Caco-2 (cell line): ENCODE measurements at regions of chr2 and their contacts with region 1.

Region 1: GRCh38 chr2:19901442-19902215 is at the start of gene TTC32:
- DNase-seq: peak; percentile 95 to 96
- H3K4me3 ChIP-seq: peak within 1 kb of the TSS; percentile 61
- H3K4me3 Mint-ChIP-seq: peak within 1 kb of the TSS; percentile 81
- H3K27ac Mint-ChIP-seq: peak within 1 kb of the TSS; percentile 96
- H3K4me1 ChIP-seq: no peaks in the 10 kb centered on the region
- H3K4me1 Mint-ChIP-seq: peaks cover 12% of the 10 kb centered on the region
- H3K27me3 ChIP-seq: no peaks in the 10 kb centered on the region
- H3K27me3 Mint-ChIP-seq: no peaks in the 10 kb centered on the region
- CTCF ChIP-seq: peak in 1 of 2 experiments; percentile 26
- total RNA-seq, gene TTC32: 15.5 and 16.8 TPM in 2 replicates

Region 2: GRCh38 chr2:19933351-19933981 is 31.8 kb after region 1 on chr2:
- CTCF ChIA-PET with region 1: no interaction called
- POLR2A ChIA-PET with region 1: interaction called, 4 read pairs
- intact Hi-C with region 1: loop called (anchors 2 kb)
- DNase-seq: peak in 1 of 2 experiments; percentile 45
- H3K4me3 ChIP-seq: no peak overlapping the region
- H3K4me3 Mint-ChIP-seq: peak overlapping the region; percentile 43
- H3K27ac Mint-ChIP-seq: peak overlapping the region; percentile 48
- H3K4me1 ChIP-seq: peaks cover 6% of the 10 kb centered on the region; the same call in 1 of the 2 replicates
- H3K4me1 Mint-ChIP-seq: peaks cover 12% of the 10 kb centered on the region
- H3K27me3 ChIP-seq: no peaks in the 10 kb centered on the region
- H3K27me3 Mint-ChIP-seq: no peaks in the 10 kb centered on the region
- CTCF ChIP-seq: no peak